Mammary epithelial cell (primary cell): ENCODE measurements at regions of chr12 and their contacts with region 1.

Region 1: DNA sequence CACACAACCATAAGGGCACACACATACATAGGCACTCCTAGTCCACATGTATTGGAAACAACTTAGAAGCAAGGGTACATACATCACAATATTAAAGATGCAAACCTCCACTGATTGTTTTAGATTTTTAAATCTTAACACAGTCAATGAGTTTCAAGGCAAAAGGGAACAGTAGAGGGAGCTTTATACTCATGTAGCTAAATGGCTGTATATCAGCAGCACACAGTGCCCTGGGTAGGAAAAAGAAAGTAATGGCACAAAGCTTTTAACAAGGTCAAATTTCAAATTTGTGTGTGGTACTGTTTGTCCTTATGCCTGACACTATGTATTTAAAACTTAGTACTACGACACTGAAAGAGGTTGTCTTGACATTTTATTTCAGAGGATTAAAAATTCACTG is 262.0 kb downstream of the MED13L start:
- DNase-seq: peak; percentile 31
- H3K4me3 ChIP-seq: no peak overlapping the region
- H3K27ac ChIP-seq: no peak overlapping the region
- H3K4me1 ChIP-seq: no peaks in the 10 kb centered on the region
- H3K27me3 ChIP-seq: no peaks in the 10 kb centered on the region
- CTCF ChIP-seq: peak; percentile 19 to 56

Region 2: GRCh38 chr12:115973968-115974724 is 41.4 kb before region 1 on chr12:
- CTCF ChIA-PET with region 1: no interaction called
- dilution Hi-C with region 1: no loop called
- in situ Hi-C with region 1: no loop called
- intact Hi-C with region 1: loop called (anchors 1 kb)
- DNase-seq: no peak
- H3K4me3 ChIP-seq: no peak overlapping the region
- H3K27ac ChIP-seq: no peak overlapping the region
- H3K4me1 ChIP-seq: no peaks in the 10 kb centered on the region
- H3K27me3 ChIP-seq: no peaks in the 10 kb centered on the region
- CTCF ChIP-seq: no peak

Region 3: DNA sequence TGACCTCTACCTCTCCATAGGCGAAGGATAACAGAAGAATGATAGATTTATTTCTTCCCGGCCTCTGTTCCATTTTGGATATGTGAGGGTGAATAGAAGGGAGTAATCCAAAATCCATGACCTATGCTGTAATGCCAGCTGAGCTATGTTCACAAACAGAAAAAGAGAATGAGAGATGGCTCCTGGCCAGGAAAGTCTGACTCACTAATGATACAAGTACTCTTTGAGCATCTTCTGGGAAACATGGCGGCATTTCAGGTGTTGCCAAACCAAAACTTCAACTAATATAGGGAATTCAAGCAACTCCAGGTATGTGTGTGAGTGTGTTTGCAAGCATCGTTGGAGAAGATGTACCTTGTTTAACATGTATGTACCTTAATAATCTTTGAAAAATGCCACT is 206.8 kb after region 1 on chr12:
- CTCF ChIA-PET with region 1: no interaction called
- dilution Hi-C with region 1: no loop called
- in situ Hi-C with region 1: loop called in 1 of 2 experiments (anchors 10 kb)
- intact Hi-C with region 1: no loop called
- DNase-seq: peak; percentile 90
- H3K4me3 ChIP-seq: no peak overlapping the region
- H3K27ac ChIP-seq: peak overlapping the region; percentile 22
- H3K4me1 ChIP-seq: peaks cover 5% of the 10 kb centered on the region
- H3K27me3 ChIP-seq: no peaks in the 10 kb centered on the region
- CTCF ChIP-seq: no peak